ENCODE measurements at regions of chr20 and their contacts with region 1.

Region 1: DNA sequence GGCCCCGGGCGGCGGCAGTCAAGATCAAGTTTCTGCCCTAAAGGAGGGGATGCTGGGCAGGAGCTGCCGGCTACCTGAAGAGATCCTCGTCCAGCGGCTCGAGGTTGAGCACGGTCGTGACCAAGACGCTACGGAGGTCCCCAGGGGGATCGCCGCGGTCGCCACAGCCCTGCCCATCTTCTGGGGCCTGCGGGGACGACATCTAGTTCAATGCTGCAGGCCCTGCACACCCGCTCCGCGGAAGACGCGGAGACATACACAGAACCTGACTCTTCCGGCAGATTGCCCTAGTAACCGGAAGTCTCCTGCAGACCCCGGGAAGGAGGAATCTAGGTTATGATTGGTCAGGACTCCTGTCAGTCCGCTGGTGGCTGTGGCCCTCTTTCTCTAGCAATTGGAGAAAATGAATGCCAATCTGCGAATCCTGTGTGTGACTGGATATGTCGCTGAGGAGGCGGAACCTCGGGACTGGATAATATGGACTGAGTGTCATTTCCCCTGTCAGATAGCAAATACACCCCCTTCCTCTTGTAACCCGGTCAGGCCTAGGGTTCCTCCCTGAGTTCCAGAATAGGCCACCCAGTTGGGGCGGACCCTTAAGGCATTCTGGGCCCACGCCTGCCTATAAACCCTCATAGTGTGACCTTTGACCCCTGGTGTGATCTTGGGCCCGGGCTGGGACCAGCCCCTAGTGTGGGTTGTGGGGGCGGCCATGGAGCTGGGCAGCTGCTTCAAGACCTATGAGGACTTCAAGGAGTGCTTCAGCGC is at the starts of genes ACOT8 and ZSWIM3:
- DNase-seq: peak; percentile 100
- H3K4me3 ChIP-seq: peak within 1 kb of the TSS; percentile 91
- H3K27ac ChIP-seq: peak within 1 kb of the TSS; percentile 42
- H3K4me1 ChIP-seq: peaks cover 20% of the 10 kb centered on the region
- CTCF ChIP-seq: no peak
- total RNA-seq, gene ACOT8: 37.1 and 44.6 TPM in 2 replicates
- total RNA-seq, gene ZSWIM3: 5.7 and 12.0 TPM in 2 replicates

Region 2: DNA sequence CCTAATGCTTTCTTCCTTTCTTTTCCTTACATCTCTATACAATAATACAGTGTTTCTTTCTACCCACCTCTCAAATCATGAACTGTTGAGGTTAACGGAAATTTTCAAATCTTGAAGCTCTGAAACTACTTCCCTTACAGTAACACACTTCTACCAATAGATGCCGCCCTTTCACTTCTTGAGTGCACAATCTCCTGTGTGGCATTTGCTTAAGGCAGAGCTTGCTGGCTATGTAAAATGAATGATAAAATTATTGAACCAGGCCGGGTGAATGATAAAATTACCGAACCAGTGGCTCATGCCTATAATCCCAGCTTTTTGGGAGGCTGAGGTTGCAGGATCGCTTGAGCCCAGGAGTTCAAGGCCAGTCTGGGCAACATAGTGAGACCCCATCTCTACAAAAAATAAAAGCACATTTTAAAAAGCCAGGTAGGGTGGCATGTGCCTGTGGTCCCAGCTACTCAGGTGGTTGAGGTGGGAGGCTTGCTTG is 813.2 kb before region 1 on chr20:
- CTCF ChIA-PET with region 1: no interaction called
- POLR2A ChIA-PET with region 1: no interaction called
- intact Hi-C with region 1: no loop called
- DNase-seq: peak; percentile 83
- H3K4me3 ChIP-seq: no peak overlapping the region
- H3K27ac ChIP-seq: peak overlapping the region; percentile 56
- H3K4me1 ChIP-seq: peaks cover 26% of the 10 kb centered on the region
- CTCF ChIP-seq: peak; percentile 97

Region 3: DNA sequence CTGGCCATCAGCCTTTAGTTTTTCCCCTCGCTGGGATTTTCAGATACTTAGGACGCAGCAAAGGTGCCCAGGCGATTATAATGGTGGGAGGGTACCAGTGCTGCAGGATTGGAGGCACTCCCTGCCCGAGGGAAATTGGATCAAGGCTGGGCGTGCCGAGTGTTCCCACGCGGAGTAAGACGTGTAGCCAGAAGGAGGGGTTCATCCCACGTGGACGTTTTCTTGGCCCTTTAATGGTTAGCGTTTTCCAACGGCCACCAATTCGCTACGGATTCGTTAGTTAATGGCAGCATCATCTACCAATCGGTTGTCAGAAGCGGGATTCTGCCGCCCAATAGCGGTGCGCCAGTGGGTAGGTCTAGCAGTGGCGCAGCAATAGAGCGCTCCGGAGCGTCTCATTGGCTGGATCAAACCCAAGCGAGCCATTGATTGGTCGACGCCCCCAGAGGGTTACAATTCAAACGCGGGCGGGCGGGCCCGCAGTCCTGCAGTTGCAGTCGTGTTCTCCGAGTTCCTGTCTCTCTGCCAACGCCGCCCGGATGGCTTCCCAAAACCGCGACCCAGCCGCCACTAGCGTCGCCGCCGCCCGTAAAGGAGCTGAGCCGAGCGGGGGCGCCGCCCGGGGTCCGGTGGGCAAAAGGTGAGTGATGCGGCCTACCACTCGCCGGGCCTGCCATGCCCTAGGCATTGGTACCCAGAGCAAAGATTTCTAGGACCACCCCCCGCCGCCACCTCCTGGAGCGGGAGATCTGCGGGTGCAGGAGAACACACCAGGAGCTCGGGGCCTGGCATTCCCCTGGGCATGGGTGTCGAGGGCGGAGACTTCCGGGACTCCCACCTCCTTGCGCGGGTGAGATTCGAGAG is 44.9 kb before region 1 on chr20 and contains the start of gene UBE2C:
- CTCF ChIA-PET with region 1: no interaction called
- POLR2A ChIA-PET with region 1: interaction called, 4 read pairs
- intact Hi-C with region 1: loop called (anchors 1 kb)
- DNase-seq: peak; percentile 99
- H3K4me3 ChIP-seq: peak within 1 kb of the TSS; percentile 82
- H3K27ac ChIP-seq: peak within 1 kb of the TSS; percentile 79
- H3K4me1 ChIP-seq: peaks cover 19% of the 10 kb centered on the region
- CTCF ChIP-seq: no peak
- total RNA-seq, gene UBE2C: 225 and 269 TPM in 2 replicates

Region 4: DNA sequence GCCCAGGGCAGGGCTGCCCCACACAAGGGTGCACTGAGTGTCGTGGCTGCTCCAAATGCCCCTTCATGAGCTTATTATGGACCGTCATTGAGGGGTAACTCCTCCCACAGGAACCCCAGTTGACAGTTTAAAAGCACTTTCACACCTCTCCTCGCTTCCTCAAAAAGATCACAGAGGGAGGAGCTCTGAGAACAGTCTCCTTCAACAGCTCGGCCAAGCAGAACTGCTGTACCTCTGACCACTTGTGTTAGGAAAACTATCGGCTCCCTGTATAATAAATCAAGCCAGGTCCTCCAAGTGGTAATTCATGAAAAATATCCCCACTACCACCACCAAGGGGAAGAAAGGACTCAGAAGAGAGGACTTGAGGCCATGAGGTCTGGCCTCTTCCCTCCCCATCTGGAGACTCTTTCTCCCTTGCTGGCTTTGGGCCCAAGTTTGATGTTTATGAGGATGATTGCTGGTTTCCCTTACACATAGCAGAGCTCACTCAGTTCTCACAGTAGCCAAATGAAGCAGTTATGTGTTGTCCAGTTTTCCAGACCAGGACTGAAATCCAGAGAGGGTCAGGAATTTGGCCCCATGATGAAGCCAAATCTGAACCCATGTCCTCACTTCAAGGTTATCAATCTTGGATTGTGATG is 15.0 kb before region 1 on chr20:
- CTCF ChIA-PET with region 1: no interaction called
- POLR2A ChIA-PET with region 1: interaction called, 11 read pairs
- intact Hi-C with region 1: no loop called
- DNase-seq: peak; percentile 84
- H3K4me3 ChIP-seq: peak overlapping the region; percentile 12
- H3K27ac ChIP-seq: peak overlapping the region; percentile 66
- H3K4me1 ChIP-seq: peaks cover 20% of the 10 kb centered on the region
- CTCF ChIP-seq: no peak

Region 5: GRCh38 chr20:45924391-45925261 is 67.3 kb after region 1 on chr20:
- CTCF ChIA-PET with region 1: no interaction called
- POLR2A ChIA-PET with region 1: no interaction called
- intact Hi-C with region 1: no loop called
- DNase-seq: no peak
- H3K4me3 ChIP-seq: no peak overlapping the region
- H3K27ac ChIP-seq: no peak overlapping the region
- H3K4me1 ChIP-seq: no peaks in the 10 kb centered on the region
- CTCF ChIP-seq: no peak

Region 6: DNA sequence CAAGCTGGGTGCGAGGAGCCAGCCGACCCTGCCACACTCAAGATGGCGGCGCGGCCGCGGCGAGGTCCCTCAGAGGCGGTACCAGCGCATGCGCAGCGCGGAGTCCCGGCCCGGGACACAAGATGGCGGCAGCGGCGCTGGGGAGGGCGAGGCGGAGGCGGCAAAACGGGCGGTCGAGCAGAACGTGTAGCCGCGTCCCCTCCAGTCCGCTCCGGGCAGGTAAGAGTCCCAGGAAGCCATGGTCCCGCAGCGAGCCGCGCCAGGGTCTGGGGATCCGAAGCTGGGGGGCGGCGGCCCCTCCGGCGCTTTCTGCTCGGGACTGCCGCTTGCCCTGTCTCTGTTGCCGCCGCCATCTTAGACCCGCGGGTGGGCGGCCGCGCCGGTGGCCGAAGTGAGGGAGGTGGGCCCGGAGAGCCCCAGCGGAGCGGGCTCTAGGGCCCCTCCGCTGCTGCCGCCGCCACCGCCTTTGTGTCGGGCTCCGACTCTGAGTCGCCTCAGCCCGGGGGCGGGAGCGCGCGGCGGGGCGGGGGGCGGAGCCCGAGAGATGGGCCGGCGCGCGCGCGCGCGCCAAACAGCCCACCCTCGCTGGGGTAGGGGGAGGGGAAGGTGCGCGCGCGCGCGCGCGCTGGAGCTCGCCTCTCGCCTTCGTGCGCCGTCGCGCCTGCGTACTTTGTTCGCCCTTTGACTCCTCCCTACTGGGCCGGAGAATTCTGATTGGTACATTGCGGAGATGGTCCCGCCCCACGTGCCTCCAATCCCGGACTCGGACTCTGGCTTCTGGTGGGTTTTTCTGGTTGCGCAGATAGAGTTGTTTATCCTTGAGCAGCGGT is 77.5 kb after region 1 on chr20 and contains the start of gene PCIF1:
- CTCF ChIA-PET with region 1: no interaction called
- POLR2A ChIA-PET with region 1: no interaction called
- intact Hi-C with region 1: loop called (anchors 2 kb)
- DNase-seq: peak; percentile 98
- H3K4me3 ChIP-seq: peak within 1 kb of the TSS; percentile 87
- H3K27ac ChIP-seq: peak within 1 kb of the TSS; percentile 75
- H3K4me1 ChIP-seq: peaks cover 8% of the 10 kb centered on the region
- CTCF ChIP-seq: no peak
- total RNA-seq, gene PCIF1: 16.7 and 21.2 TPM in 2 replicates